CD8-positive, alpha-beta T cell (primary cell): ENCODE measurements at regions of chr10 and their contacts with region 1.

Region 1: DNA sequence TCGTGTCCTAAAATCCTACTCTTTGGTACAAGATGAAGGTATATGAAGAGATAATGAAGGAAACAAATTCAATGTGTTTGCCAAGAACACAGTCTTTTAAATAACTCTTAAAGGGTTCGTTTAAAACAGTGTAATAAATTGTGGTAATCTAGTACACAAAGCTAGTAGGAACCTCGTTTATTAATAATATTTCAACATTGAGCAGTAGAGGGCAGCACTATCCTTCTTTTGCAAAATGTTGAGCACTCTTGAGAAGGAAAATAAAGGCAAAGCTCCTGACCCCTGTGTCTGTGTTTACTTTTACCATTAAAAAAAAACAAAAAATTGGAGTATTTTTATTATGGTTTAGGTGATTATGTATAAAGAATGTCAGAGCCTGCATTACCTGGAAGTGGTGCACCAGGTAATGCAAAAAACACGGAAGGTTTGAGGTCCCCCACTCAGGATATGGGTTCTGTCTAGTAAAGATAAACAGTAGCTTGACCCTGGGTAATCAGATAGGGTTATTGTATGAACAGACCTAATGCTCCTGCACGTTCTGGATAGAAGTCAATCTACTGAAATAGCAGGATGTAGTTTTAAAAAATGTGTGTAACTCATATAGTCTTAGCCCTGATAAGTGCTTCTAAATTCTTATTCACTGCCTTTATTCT is 5.7 kb upstream of the GOT1 start:
- DNase-seq: peak in 2 of 9 experiments; percentile 51 to 58
- ATAC-seq: peak; percentile 62
- H3K4me3 ChIP-seq: no peak overlapping the region
- H3K4me3 Mint-ChIP-seq: no peak overlapping the region
- H3K27ac ChIP-seq: no peak overlapping the region
- H3K27ac Mint-ChIP-seq: no peak overlapping the region
- H3K4me1 ChIP-seq: peaks cover 10% of the 10 kb centered on the region
- H3K4me1 Mint-ChIP-seq: peaks cover 25% of the 10 kb centered on the region
- H3K27me3 ChIP-seq: no peaks in the 10 kb centered on the region
- H3K27me3 Mint-ChIP-seq: no peaks in the 10 kb centered on the region
- CTCF ChIP-seq: peak; percentile 80

Region 2: GRCh38 chr10:99303899-99304861 is 131.9 kb before region 1 on chr10:
- CTCF ChIA-PET with region 1: no interaction called
- POLR2A ChIA-PET with region 1: no interaction called
- intact Hi-C with region 1: no loop called
- DNase-seq: no peak
- ATAC-seq: no peak
- H3K4me3 ChIP-seq: no peak overlapping the region
- H3K4me3 Mint-ChIP-seq: no peak overlapping the region
- H3K27ac ChIP-seq: no peak overlapping the region
- H3K27ac Mint-ChIP-seq: no peak overlapping the region
- H3K4me1 ChIP-seq: no peaks in the 10 kb centered on the region
- H3K4me1 Mint-ChIP-seq: no peaks in the 10 kb centered on the region
- H3K27me3 ChIP-seq: no peaks in the 10 kb centered on the region
- H3K27me3 Mint-ChIP-seq: peaks cover 18% of the 10 kb centered on the region
- CTCF ChIP-seq: no peak

Region 3: GRCh38 chr10:99450624-99451498 is 14.7 kb after region 1 on chr10:
- CTCF ChIA-PET with region 1: interaction called, 25 read pairs
- POLR2A ChIA-PET with region 1: no interaction called
- intact Hi-C with region 1: no loop called
- DNase-seq: no peak
- ATAC-seq: no peak
- H3K4me3 ChIP-seq: no peak overlapping the region
- H3K4me3 Mint-ChIP-seq: no peak overlapping the region
- H3K27ac ChIP-seq: no peak overlapping the region
- H3K27ac Mint-ChIP-seq: no peak overlapping the region
- H3K4me1 ChIP-seq: no peaks in the 10 kb centered on the region
- H3K4me1 Mint-ChIP-seq: no peaks in the 10 kb centered on the region
- H3K27me3 ChIP-seq: peaks cover 0 to 3% of the 10 kb centered on the region in 2 experiments
- H3K27me3 Mint-ChIP-seq: peaks cover 49% of the 10 kb centered on the region
- CTCF ChIP-seq: no peak